Calu3 (cell line): ENCODE measurements at regions of chr12 and their contacts with region 1.

Region 1: DNA sequence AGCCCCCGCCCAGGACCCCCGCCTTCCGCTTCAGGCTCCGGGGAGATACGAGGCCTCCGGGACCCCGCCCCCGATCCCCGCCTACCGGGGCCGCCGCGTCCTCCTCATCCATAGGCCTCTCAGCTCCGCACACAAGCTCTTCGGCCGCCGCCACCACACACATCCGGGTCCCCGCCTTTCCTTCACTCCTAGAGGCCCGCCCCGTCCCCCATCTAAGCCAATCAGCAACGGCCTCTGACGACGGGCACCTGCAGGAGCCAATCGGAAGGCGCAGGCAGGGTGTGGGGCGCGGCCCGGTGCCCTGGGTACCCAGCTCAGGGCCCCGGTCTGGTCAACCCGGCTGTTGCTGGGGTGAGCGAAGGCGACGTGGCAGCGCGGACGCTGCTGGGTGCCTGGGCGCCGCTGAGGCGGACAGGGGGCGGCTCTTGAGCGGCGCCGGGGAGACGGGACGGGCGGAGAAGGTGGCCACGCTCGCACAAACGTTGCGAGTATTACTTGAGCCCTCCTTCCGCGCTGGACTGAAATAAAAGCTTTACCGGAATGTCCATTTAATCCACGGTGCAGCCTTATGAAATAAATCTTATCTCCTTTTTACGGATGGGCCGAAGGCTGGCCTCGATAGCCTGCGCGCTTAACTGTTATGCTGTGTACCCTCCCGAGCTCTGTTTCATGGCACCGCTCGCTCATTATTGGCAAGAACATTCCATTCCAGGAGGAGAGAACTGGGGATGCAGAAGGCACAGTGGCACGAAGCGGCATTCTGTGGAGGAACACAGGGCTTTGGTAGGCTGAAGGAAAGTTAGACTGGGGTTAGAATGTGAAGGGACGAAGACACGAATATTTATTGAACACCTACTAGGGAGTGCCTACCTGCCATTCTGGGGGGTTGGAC is at the start of gene SPRYD3:
- DNase-seq: peak; percentile 93
- H3K4me3 Mint-ChIP-seq: peak within 1 kb of the TSS; percentile 91
- H3K27ac Mint-ChIP-seq: peak within 1 kb of the TSS; percentile 89
- H3K4me1 Mint-ChIP-seq: no peaks in the 10 kb centered on the region
- H3K27me3 Mint-ChIP-seq: no peaks in the 10 kb centered on the region
- CTCF ChIP-seq: no peak
- total RNA-seq, gene SPRYD3: 12.9 and 14.6 TPM in 2 replicates

Region 2: GRCh38 chr12:53098982-53099651 is 19.6 kb after region 1 on chr12:
- CTCF ChIA-PET with region 1: interaction called, 17 read pairs
- intact Hi-C with region 1: no loop called
- DNase-seq: peak; percentile 87
- H3K4me3 Mint-ChIP-seq: peak overlapping the region; percentile 81
- H3K27ac Mint-ChIP-seq: peak overlapping the region; percentile 84
- H3K4me1 Mint-ChIP-seq: peaks cover 32% of the 10 kb centered on the region
- H3K27me3 Mint-ChIP-seq: no peaks in the 10 kb centered on the region
- CTCF ChIP-seq: peak; percentile 80